Transverse colon (tissue), 4 donors: ENCODE measurements at regions of chr3 and their contacts with region 1.

Region 1: DNA sequence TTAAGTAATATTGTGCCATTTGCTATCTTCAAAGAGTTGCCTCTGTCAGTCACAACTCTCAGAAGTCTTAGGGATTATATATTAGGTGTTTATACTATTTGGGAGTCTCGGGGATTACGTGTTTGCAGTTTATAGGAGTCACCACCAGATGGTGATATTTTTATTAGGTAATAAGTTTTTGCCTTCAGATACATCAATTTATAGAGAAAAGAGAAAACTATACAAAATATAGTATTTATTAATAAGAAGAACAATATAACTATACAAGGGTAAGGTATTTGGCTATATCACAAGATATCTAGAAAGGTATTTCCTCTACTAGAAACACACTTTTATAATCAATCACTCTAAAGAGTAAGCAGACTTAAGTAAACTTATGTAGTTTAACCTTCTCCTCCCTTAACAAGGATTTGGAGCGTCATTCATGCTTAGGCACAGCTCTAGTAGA is 10.7 kb upstream of the DHX36 start:
- DNase-seq: no peak
- H3K4me3 ChIP-seq: no peak overlapping the region
- H3K27ac ChIP-seq: no peak overlapping the region
- H3K4me1 ChIP-seq: no peaks in the 10 kb centered on the region
- H3K27me3 ChIP-seq: no peaks in the 10 kb centered on the region
- CTCF ChIP-seq: peak; percentile 28 to 61 (median 46)
- EP300 ChIP-seq: no peak
- POLR2A ChIP-seq: no peak

Region 2: DNA sequence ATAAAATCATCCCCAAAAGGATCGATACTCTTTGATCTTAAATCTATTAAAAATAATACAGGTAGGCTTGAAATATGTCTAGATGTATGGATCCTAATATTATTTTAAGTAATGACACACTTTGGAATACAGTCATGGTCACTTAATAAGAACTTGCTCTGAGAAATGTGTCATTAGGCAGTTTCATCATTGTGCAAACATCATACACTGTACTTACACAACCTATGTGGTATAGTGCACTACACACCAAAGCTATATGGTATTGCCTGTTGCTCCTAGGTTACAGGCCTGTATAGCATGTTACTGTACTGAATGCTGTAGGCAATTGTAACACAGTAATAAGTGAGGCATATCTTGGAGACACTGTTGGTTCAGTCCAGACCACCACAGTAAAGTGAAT is 865.8 kb before region 1 on chr3:
- in situ Hi-C with region 1: no loop called
- intact Hi-C with region 1: loop called (anchors 5 kb)
- DNase-seq: no peak
- H3K4me3 ChIP-seq: no peak overlapping the region
- H3K27ac ChIP-seq: no peak overlapping the region
- H3K4me1 ChIP-seq: no peaks in the 10 kb centered on the region
- H3K27me3 ChIP-seq: no peaks in the 10 kb centered on the region
- CTCF ChIP-seq: no peak
- EP300 ChIP-seq: no peak
- POLR2A ChIP-seq: no peak

Region 3: DNA sequence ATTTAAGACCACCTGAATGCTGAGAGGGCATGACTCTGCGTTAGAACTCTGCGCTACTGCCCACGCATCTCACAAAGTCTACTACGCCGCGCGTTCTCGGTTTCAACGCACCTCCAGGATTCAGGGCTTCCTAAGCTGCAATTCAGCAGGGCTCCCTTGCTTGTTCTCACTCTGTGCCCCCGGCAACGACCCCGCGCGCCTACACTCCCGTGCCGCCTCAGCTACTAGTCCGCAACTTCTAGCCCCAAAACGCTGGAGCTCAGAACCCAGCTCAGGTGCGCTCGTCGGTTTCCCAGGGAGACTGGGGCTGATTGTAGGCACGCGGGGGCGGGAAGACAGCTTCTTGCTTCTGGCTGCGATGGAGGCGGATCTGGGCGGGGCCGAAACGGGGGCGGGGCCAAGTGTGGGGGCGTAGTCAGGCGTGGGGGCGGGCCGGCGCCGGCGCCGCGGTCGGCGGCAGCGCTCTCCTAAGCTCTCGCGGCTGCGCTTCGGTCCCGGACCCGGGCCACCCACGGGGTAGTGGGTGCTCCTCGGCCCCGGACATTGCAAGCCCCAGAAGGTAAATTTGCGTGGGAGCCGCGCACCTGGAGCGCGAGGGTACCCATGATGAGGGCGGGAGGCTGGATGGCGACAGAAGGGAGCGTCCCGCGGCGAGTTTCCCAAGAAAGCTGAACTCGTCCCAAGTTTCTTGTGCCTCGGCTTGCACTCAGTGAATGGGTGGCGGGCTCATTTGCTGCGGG is 213.9 kb before region 1 on chr3 and contains the start of gene ARHGEF26:
- in situ Hi-C with region 1: no loop called
- intact Hi-C with region 1: no loop called
- DNase-seq: peak; percentile 91
- H3K4me3 ChIP-seq: peak within 1 kb of the TSS; percentile 56 to 93 (median 74)
- H3K27ac ChIP-seq: peak within 1 kb of the TSS; percentile 78 to 88 (median 83)
- H3K4me1 ChIP-seq: peaks cover 5 to 31% (median 15%) of the 10 kb centered on the region in 4 donors
- H3K27me3 ChIP-seq: peaks cover 7% of the 10 kb centered on the region
- CTCF ChIP-seq: no peak
- EP300 ChIP-seq: no peak
- POLR2A ChIP-seq: peak; percentile 56
- total RNA-seq, gene ARHGEF26: 8.6 to 15.0 (median 13.2) TPM

Region 4: GRCh38 chr3:155481089-155481488 is 1146.1 kb after region 1 on chr3:
- in situ Hi-C with region 1: no loop called
- intact Hi-C with region 1: loop called (anchors 5 kb)
- DNase-seq: no peak
- H3K4me3 ChIP-seq: no peak overlapping the region
- H3K27ac ChIP-seq: no peak overlapping the region
- H3K4me1 ChIP-seq: no peaks in the 10 kb centered on the region
- H3K27me3 ChIP-seq: no peaks in the 10 kb centered on the region
- CTCF ChIP-seq: no peak
- EP300 ChIP-seq: no peak
- POLR2A ChIP-seq: no peak